HCT116 (cell line): ENCODE measurements at regions of chr3 and their contacts with region 1.

Region 1: DNA sequence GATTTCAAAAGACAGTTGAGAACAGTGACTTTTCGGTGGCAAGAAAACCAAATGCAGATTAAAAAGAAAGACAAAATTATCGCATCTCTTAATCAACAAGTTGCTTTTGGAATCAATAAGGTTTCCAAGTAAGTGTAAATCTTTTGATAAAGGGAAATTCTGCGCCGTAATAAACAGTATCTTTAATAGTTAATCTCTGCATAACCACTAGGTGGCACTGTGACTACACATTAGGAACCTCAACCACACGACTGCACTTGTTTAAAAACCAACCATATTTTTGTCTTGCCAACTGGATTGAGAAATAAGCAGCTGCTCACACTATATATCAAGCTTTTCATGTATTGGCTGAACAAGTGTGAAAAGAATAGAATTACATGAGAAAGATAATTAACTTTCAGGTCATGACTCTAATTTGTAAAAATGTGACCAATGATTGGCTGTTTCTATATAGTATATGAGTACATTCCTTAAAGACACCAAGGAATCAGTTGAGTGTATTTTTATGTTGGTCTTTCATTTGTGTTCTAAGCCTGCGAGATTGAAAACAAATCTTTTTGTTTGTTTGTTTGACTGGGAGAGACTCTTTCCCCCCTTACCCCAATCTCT is 72.7 kb downstream of the DZIP3 start:
- DNase-seq: peak; percentile 43
- ATAC-seq: peak; percentile 57; the same call in 1 of the 2 replicates
- H3K4me3 ChIP-seq: no peak overlapping the region
- H3K27ac ChIP-seq: no peak overlapping the region
- H3K4me1 ChIP-seq: no peaks in the 10 kb centered on the region
- H3K27me3 ChIP-seq: no peaks in the 10 kb centered on the region
- CTCF ChIP-seq: peak; percentile 48 to 85 (median 77)
- POLR2A ChIP-seq: no peak
- RAD21 ChIP-seq: peak; percentile 84

Region 2: DNA sequence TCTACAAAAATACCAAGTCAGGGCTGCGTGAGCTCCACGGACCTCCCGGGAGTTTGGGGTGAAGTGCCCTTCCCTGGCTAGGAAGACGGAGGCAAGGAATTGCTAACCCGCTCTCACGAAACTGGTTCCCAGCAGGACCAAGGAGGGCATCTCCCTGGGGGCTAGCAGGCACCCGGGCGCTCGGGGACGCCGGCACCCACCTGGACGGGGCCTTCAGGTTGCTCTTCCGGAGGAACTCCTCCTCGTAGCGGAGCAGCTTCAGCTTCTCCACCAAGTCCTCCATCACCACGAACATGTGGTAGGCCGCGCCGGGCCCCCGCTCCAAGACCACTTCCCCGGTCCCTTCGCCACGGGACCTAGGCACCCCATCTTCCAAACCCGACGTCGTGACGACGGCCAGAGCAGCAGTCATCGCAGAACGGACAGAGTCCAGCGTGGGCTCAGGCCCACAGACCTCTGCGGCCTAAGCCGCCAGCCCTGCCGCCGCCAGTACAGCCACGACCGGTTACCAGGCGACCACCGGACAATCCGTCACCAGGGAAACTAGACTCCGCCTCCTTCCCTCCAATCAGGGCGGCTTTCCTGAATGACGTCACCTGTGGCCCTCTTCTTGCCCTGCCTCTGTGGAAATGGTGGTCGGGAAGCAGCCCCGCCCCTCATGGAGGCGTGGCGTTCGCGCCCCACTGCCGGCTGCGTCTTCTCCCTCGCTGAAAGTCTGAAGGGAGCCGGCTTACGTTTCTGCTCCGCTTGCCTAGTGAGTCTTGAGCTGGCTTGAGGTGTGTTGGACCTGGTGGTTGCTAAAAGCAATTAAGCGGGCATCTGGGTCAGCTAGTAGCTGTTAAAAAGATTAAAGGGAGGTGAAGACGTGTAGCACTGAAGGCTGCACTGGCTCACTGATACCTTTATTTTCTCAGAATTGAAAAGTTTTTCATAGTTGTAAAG is 440.1 kb before region 1 on chr3 and contains the start of gene IFT57:
- CTCF ChIA-PET with region 1: no interaction called
- POLR2A ChIA-PET with region 1: no interaction called
- RAD21 ChIA-PET with region 1: no interaction called
- intact Hi-C with region 1: no loop called
- DNase-seq: peak; percentile 92
- ATAC-seq: peak; percentile 97
- H3K4me3 ChIP-seq: peak within 1 kb of the TSS; percentile 76 to 88
- H3K27ac ChIP-seq: peak within 1 kb of the TSS; percentile 20; the same call in 1 of the 2 replicates
- H3K4me1 ChIP-seq: peaks cover 0 to 21% of the 10 kb centered on the region in 2 experiments; a peak in 1 of 4 replicates
- H3K27me3 ChIP-seq: no peaks in the 10 kb centered on the region
- CTCF ChIP-seq: no peak
- POLR2A ChIP-seq: no peak
- RAD21 ChIP-seq: no peak
- total RNA-seq, gene IFT57: 38.4 TPM

Region 3: DNA sequence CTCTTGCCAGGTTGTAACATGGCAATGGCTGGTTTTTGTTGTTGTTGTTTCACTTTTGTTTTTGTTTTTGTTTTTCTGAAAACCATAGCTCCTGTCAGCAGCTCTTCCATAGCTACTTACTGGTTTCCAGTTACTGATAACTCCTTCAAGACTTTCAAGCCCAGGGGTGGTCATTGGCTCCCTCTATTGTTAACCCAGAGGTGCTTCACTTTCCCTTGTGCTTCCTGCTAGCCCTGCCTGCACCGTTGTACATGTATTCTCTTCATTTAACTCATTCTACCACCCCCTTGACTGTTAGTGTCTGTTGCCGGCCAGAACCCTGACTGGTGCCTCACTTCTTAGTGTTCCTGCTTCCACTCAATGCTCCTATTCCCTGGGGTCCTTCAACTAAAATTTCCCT is 156.2 kb after region 1 on chr3:
- CTCF ChIA-PET with region 1: interaction called, 6 read pairs
- POLR2A ChIA-PET with region 1: no interaction called
- RAD21 ChIA-PET with region 1: interaction called in 1 of 2 experiments, 3 read pairs
- intact Hi-C with region 1: loop called (anchors 1 kb)
- DNase-seq: peak; percentile 57
- ATAC-seq: peak; percentile 99
- H3K4me3 ChIP-seq: no peak overlapping the region
- H3K27ac ChIP-seq: no peak overlapping the region
- H3K4me1 ChIP-seq: no peaks in the 10 kb centered on the region
- H3K27me3 ChIP-seq: no peaks in the 10 kb centered on the region
- CTCF ChIP-seq: peak; percentile 40 to 62 (median 61); a peak in 4 of 6 replicates
- POLR2A ChIP-seq: no peak
- RAD21 ChIP-seq: peak; percentile 79

Region 4: GRCh38 chr3:108914774-108915641 is 252.8 kb after region 1 on chr3:
- CTCF ChIA-PET with region 1: interaction called, 14 read pairs
- POLR2A ChIA-PET with region 1: no interaction called
- RAD21 ChIA-PET with region 1: no interaction called
- intact Hi-C with region 1: loop called (anchors 1 kb)
- DNase-seq: peak; percentile 69
- ATAC-seq: peak; percentile 91
- H3K4me3 ChIP-seq: no peak overlapping the region
- H3K27ac ChIP-seq: no peak overlapping the region
- H3K4me1 ChIP-seq: peaks cover 4 to 23% of the 10 kb centered on the region in 2 experiments; a peak in 3 of 4 replicates
- H3K27me3 ChIP-seq: no peaks in the 10 kb centered on the region
- CTCF ChIP-seq: peak; percentile 56 to 93 (median 86); a peak in 5 of 6 replicates
- POLR2A ChIP-seq: no peak
- RAD21 ChIP-seq: peak; percentile 89

Region 5: DNA sequence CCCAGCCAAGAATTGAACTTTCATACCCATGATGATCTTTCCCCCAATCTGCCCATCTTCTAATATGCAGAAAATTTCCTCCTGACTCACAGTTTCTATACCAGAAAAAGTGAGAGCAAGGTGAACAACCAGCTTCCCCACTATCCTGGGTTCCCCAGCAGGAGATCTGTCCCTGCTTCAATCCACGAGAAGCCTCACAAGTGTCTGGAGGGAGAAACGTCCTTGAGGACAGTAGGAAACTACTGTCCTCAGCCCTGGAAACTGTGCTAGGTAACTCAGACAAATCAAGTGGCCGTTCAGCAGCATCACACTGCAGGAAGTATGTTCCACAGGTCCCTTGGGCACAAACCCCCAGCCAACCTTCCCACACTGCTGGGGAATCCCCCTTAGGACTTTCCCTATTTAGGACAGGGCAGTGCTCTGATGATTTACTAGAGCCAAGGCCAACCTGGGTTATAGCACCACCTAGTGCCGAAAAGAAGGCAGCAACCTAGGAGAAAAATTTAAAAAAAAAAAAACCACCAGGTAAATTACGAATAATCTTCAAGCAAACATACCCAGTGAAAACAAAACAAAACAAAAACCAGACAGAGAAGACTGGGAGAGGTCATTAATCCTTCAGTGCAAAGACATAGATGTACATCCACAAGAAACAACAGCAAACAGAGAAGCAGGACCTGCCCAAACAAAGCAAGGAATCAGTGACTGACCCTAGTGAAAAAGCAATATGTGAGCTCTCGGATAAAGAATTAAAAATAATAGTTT is 419.7 kb after region 1 on chr3:
- CTCF ChIA-PET with region 1: no interaction called
- POLR2A ChIA-PET with region 1: no interaction called
- RAD21 ChIA-PET with region 1: interaction called in 1 of 2 experiments, 3 read pairs
- intact Hi-C with region 1: loop called (anchors 1 kb)
- DNase-seq: peak; percentile 48
- ATAC-seq: peak; percentile 91
- H3K4me3 ChIP-seq: no peak overlapping the region
- H3K27ac ChIP-seq: no peak overlapping the region
- H3K4me1 ChIP-seq: no peaks in the 10 kb centered on the region; a peak in 1 of 4 replicates
- H3K27me3 ChIP-seq: no peaks in the 10 kb centered on the region
- CTCF ChIP-seq: peak; percentile 59 to 90 (median 77); a peak in 5 of 6 replicates
- POLR2A ChIP-seq: no peak
- RAD21 ChIP-seq: peak; percentile 74

Region 6: GRCh38 chr3:109224333-109224732 is 562.1 kb after region 1 on chr3:
- CTCF ChIA-PET with region 1: interaction called, 3 read pairs
- POLR2A ChIA-PET with region 1: no interaction called
- RAD21 ChIA-PET with region 1: no interaction called
- intact Hi-C with region 1: loop called (anchors 10 kb)
- DNase-seq: peak; percentile 6
- ATAC-seq: peak; percentile 89
- H3K4me3 ChIP-seq: no peak overlapping the region
- H3K27ac ChIP-seq: no peak overlapping the region
- H3K4me1 ChIP-seq: no peaks in the 10 kb centered on the region
- H3K27me3 ChIP-seq: no peaks in the 10 kb centered on the region
- CTCF ChIP-seq: peak; percentile 36 to 88 (median 82); a peak in 5 of 6 replicates
- POLR2A ChIP-seq: no peak
- RAD21 ChIP-seq: peak; percentile 62